GM18951 (cell line): ENCODE measurements at regions of chr9 and their contacts with region 1.

Region 1: DNA sequence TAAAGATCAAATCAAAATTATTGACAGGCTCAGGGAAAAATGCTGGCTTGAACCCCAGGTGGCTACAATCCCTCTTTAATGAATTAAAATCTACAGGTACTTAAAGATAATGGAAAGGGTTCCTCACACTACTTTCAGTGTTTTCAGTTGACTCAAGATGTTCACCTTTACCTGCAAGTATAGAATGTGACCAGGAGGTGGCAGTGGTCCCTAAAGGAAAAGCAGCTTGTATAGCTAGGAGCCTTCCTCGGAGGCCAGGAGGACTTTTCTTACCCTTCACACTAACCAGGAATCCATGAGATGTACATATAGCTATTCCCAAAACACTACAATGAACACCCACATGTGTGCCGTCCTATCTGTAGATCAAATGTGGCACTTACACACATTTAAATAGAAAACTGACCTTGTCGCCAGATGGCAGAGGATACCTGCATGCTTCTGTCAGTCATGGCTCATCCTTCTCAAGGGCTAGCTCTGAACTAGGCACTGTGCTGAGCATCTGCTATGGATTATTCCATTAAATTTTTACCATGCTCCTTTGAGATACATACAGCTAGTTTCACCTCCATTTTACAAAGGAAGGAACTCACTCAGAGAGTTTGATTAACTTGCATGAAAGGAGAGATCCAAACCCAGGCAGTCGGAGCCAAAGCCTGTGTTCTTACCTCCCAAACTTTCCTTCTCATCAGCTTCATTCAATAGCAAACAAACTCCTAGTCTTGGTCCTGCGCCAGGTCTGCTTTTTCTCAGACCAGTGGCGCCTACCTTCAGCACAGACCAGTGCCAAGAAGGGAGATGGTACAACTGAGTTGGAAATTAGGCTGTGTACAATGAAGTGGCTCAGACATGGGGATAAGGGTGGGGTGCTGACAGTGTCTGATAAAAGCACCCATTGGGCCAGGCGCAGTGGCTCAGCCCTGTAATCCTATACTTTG is 24.5 kb downstream of the C9orf152 start:
- POLR2A ChIP-seq: no peak

Region 2: DNA sequence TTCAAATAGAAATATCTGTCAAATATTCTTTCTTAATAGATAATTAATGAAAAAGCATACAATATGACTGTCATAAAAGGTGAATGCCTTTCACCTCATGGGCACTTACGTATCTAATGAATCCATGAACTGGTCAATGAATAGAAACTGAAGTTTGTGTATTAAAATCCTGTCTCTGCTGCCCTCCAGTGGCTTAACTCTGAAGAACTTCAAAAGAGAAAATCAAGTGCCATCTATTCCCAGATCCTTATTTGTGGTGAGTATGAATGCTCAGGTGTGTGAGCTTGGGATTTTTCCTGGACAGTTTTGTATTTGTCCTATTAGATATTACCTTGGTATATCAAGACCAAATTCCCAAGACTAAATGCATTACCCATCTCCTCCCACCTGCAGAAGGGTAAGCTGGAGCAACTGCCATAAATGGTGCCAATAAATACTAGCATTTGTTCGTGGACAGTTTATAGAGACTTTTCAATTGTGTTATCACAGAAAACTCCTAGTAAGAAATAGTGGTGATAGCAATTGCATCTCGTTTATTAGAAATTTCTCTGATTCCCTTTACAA is 440.1 kb after region 1 on chr9:
- in situ Hi-C with region 1: loop called (anchors 10 kb)
- POLR2A ChIP-seq: no peak

Region 3: GRCh38 chr9:110874963-110875674 is 691.6 kb after region 1 on chr9:
- in situ Hi-C with region 1: no loop called
- POLR2A ChIP-seq: no peak